Ascending aorta (tissue), 2 donors: ENCODE measurements at regions of chr4 and their contacts with region 1.

Region 1: DNA sequence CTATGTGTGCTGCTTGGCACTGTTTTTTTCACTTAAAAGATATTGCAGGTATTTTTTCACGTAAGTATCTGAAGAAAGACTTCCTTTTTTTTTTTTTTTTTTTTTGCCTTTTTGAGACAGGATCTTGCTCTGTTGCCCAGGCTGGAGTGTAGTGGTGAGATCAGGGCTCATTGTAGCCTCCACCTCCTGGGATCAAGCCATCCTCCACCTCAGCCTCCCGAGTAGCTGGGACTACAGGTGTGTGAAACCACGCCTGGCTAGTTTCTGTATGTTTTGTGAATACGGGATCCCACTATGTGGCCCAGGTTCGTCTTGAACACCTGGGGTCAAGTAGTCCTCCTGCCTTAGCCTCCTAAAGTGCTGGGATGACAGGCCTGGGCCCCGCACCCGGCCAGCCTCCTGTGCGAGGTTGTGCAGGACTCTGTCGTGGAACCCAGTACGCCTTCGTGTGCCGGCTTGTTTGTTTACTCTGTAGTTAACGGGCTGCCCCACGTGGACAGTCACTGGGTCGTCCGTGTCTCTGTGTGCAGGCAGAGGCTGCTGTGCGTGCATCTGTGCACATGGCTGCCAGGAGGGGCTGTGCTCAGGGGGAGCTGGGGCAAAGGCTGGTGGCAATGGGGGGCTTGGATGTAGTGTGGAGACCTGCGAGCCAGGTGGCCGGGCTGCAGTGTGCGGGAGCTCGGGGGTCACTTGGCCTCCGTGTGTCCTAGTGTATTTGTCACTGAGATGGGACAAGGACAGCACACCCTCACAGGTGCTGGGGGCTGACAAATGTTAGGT is 179.5 kb downstream of the ADRA2C start:
- DNase-seq: no peak
- H3K4me3 ChIP-seq: no peak overlapping the region
- H3K27ac ChIP-seq: no peak overlapping the region
- H3K4me1 ChIP-seq: no peaks in the 10 kb centered on the region
- H3K27me3 ChIP-seq: no peaks in the 10 kb centered on the region
- CTCF ChIP-seq: no peak

Region 2: GRCh38 chr4:2241410-2242353 is 1704.0 kb before region 1 on chr4 and contains the starts of genes HAUS3 and POLN:
- intact Hi-C with region 1: loop called (anchors 10 kb)
- DNase-seq: peak; percentile 90 to 99
- H3K4me3 ChIP-seq: peak within 1 kb of the TSS; percentile 65 to 97
- H3K27ac ChIP-seq: peak within 1 kb of the TSS; percentile 60 to 69
- H3K4me1 ChIP-seq: peaks cover 6 to 37% of the 10 kb centered on the region in 2 donors
- H3K27me3 ChIP-seq: no peaks in the 10 kb centered on the region
- CTCF ChIP-seq: no peak
- total RNA-seq, gene HAUS3: 9.0 TPM
- total RNA-seq, gene POLN: 0.21 TPM